Activated naive CD4-positive, alpha-beta T cell treated with anti-CD3 and anti-CD28 coated beads for 36 hours (primary cell): ENCODE measurements at regions of chr5 and their contacts with region 1.

Region 1: DNA sequence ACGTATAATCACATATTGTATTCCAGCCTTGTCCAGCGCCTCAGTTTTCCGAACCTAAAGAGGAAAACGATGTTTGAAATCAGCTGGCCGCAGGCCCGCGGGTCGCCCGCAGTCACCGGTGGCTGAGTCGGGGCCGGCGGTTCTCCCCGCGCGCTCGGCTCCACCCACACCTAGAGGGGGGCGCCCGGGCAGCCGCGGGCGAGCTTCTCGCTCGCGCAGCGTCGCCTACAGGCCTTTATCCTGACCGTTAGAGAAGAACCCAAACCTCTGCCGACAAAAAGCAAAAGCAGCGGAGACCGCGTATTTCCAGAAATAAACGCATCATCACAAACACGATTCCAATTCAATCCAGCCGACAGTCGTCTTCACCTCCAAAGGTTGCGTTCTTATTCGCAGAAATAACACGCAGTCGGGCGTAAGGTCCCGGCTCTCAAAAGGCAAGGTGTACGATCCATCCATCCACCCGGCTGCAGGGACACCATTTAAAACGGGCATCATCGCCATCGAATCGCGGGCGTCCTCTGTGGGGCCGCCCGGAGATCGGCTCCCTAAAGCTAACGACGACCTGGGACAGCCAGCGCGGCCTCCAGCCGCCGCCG is 680 bp upstream of the NIPBL start:
- DNase-seq: peak; percentile 77
- H3K4me3 Mint-ChIP-seq: peak overlapping the region; percentile 83
- H3K27ac Mint-ChIP-seq: peak overlapping the region; percentile 96
- H3K4me1 Mint-ChIP-seq: peaks cover 25% of the 10 kb centered on the region
- H3K27me3 Mint-ChIP-seq: no peaks in the 10 kb centered on the region

Region 2: DNA sequence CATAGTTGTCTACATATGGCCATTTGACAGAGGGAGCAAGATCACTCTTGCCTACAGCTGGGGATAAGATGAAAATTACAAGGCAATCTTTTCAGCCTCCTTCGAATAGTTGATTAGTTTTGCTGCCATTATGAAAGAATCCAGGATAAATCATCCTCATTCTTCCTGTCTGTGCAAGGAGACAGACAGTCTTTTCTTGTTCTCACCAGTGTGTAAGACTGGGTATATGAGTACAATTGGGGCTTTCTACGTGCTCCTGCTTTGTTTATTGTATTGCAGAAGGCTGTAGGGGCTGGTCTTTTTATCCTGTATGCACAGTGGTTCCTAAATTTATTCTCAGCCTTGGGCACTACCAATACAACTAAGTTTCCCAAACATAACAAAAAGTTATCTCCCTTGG is 1181.4 kb before region 1 on chr5:
- CTCF ChIA-PET with region 1: no interaction called
- intact Hi-C with region 1: no loop called
- DNase-seq: no peak
- H3K4me3 Mint-ChIP-seq: no peak overlapping the region
- H3K27ac Mint-ChIP-seq: no peak overlapping the region
- H3K4me1 Mint-ChIP-seq: no peaks in the 10 kb centered on the region
- H3K27me3 Mint-ChIP-seq: no peaks in the 10 kb centered on the region

Region 3: DNA sequence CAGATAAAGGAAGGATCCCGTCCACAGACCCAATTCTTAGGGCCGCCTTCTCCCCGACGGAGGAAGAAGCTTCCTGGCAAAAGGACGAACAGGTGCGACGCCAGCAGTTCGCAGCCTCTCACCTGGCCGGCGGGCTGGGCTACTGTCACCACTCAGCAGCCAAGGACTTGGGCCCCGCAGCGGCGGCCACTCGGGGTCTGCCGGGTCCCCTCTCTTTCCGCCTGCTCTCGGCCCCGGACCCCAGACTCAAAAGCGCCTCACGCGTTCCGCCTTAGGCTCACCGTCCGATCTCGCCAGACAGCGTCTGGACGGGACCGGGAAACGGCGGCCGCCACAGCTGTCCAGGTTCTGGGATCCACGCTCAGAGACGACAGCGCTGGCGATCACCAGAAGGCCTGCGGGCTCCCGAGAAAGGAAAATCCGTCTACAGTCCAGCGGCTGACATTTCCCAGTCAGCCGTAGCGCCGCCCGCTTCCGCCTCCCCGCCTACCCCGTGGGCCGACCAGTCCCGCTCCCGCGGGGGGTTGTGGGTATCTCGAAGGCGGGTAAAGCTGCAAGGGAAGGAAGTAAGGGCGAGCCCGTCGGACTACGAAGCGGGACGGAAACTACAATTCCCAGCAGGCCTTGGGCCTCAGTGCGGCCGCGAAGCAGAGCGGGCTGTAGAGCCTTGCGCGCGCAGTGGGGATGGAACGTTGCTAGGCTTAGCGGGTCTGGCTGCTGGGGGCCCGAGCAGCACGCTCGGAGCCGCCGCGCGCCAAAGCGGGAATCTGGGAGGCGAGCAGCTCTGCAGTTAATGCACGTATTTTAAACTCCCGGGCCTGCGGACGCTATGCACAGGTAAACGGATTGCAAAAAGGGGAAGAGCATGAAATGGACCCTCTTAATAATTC is 724.2 kb before region 1 on chr5 and contains the starts of genes LMBRD2 and SKP2:
- CTCF ChIA-PET with region 1: no interaction called
- intact Hi-C with region 1: loop called (anchors 2 kb)
- DNase-seq: peak; percentile 98
- H3K4me3 Mint-ChIP-seq: peak within 1 kb of the TSS; percentile 96
- H3K27ac Mint-ChIP-seq: peak within 1 kb of the TSS; percentile 76
- H3K4me1 Mint-ChIP-seq: peaks cover 67% of the 10 kb centered on the region
- H3K27me3 Mint-ChIP-seq: no peaks in the 10 kb centered on the region
- total RNA-seq, gene LMBRD2: 7.6 to 8.0 TPM
- total RNA-seq, gene SKP2: 44.4 to 48.1 TPM

Region 4: DNA sequence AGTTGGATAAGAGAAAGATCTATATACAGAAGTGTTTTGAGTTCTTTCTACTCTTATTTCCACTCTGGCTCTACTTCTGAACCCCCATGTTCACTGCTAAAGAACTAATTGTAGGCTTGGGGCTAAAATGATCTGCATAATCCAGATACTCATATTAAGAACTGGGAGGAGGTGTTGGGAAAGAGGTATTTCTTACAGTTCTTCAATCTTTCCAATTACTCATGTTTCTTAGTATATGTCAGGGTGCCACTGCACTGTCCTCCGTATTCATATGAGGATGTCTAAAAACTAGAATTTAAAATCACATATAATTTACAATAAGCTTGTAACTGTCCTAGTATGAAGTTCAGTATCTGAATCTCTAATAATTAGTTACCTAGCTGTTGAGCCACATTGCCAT is 13.4 kb after region 1 on chr5:
- CTCF ChIA-PET with region 1: interaction called, 3 read pairs
- intact Hi-C with region 1: loop called (anchors 1 kb)
- DNase-seq: peak; percentile 21
- H3K4me3 Mint-ChIP-seq: no peak overlapping the region
- H3K27ac Mint-ChIP-seq: no peak overlapping the region
- H3K4me1 Mint-ChIP-seq: peaks cover 65% of the 10 kb centered on the region
- H3K27me3 Mint-ChIP-seq: no peaks in the 10 kb centered on the region

Region 5: GRCh38 chr5:36944607-36945225 is 68.8 kb after region 1 on chr5:
- CTCF ChIA-PET with region 1: interaction called, 5 read pairs
- intact Hi-C with region 1: loop called (anchors 1 kb)
- DNase-seq: no peak
- H3K4me3 Mint-ChIP-seq: no peak overlapping the region
- H3K27ac Mint-ChIP-seq: no peak overlapping the region
- H3K4me1 Mint-ChIP-seq: peaks cover 49% of the 10 kb centered on the region
- H3K27me3 Mint-ChIP-seq: no peaks in the 10 kb centered on the region

Region 6: GRCh38 chr5:37248970-37249686 is 373.2 kb after region 1 on chr5 and contains the start of gene CPLANE1:
- CTCF ChIA-PET with region 1: no interaction called
- intact Hi-C with region 1: loop called (anchors 5 kb)
- DNase-seq: peak; percentile 60
- H3K4me3 Mint-ChIP-seq: peak within 1 kb of the TSS; percentile 82
- H3K27ac Mint-ChIP-seq: no peak within 1 kb of the TSS
- H3K4me1 Mint-ChIP-seq: peaks cover 20% of the 10 kb centered on the region
- H3K27me3 Mint-ChIP-seq: no peaks in the 10 kb centered on the region
- total RNA-seq, gene CPLANE1: 3.6 to 5.2 TPM

Region 7: GRCh38 chr5:37722236-37723146 is 846.6 kb after region 1 on chr5:
- CTCF ChIA-PET with region 1: no interaction called
- intact Hi-C with region 1: loop called (anchors 10 kb)
- DNase-seq: peak; percentile 68
- H3K4me3 Mint-ChIP-seq: no peak overlapping the region
- H3K27ac Mint-ChIP-seq: peak overlapping the region; percentile 50
- H3K4me1 Mint-ChIP-seq: peaks cover 26% of the 10 kb centered on the region
- H3K27me3 Mint-ChIP-seq: no peaks in the 10 kb centered on the region